T-cell (primary cell): ENCODE measurements at regions of chr4 and their contacts with region 1.

Region 1: GRCh38 chr4:139030614-139031235 is 15.1 kb downstream of the NOCT start:
- DNase-seq: peak; percentile 35 to 92 (median 70)
- ATAC-seq: peak; percentile 62 to 81 (median 75)
- H3K4me3 ChIP-seq: no peak overlapping the region
- H3K4me3 Mint-ChIP-seq: no peak overlapping the region
- H3K27ac ChIP-seq: no peak overlapping the region
- H3K27ac Mint-ChIP-seq: no peak overlapping the region
- H3K4me1 ChIP-seq: peaks cover 2 to 4% of the 10 kb centered on the region in 2 experiments
- H3K4me1 Mint-ChIP-seq: peaks cover 7 to 11% (median 9%) of the 10 kb centered on the region in 3 donors
- H3K27me3 ChIP-seq: no peaks in the 10 kb centered on the region
- H3K27me3 Mint-ChIP-seq: no peaks in the 10 kb centered on the region

Region 2: DNA sequence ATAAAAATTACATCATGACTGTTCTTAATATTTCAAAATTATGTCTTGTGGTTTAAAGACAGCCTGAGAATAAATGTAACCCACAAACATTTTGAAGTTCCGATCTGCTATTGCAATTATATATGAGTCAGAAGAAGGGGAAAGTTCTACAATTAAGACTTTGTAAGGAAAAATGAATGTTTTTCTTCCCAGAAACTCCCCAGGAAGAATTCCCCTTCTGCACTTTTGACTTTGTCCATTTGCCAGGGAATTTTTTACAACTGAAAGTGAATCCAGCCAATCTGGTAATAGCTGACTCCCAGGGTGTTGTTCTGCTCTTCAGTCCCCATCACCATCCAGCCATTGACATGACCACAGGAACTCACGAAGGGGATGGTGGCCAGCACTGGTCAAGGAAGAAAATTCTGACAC is 76.8 kb before region 1 on chr4:
- CTCF ChIA-PET with region 1: no interaction called
- POLR2A ChIA-PET with region 1: no interaction called
- DNase-seq: no peak
- ATAC-seq: no peak
- H3K4me3 ChIP-seq: no peak overlapping the region
- H3K4me3 Mint-ChIP-seq: no peak overlapping the region
- H3K27ac ChIP-seq: no peak overlapping the region
- H3K27ac Mint-ChIP-seq: no peak overlapping the region
- H3K4me1 ChIP-seq: peaks cover 0 to 3% of the 10 kb centered on the region in 2 experiments
- H3K4me1 Mint-ChIP-seq: peaks cover 0 to 4% (median 3%) of the 10 kb centered on the region in 3 donors
- H3K27me3 ChIP-seq: no peaks in the 10 kb centered on the region
- H3K27me3 Mint-ChIP-seq: peaks cover 10 to 15% of the 10 kb centered on the region in 2 donors

Region 3: GRCh38 chr4:139007640-139008039 is 23.1 kb before region 1 on chr4:
- CTCF ChIA-PET with region 1: interaction called in 1 of 2 experiments, 5 read pairs
- POLR2A ChIA-PET with region 1: interaction called in 1 of 2 experiments, 12 read pairs
- DNase-seq: no peak
- ATAC-seq: no peak
- H3K4me3 ChIP-seq: no peak overlapping the region
- H3K4me3 Mint-ChIP-seq: no peak overlapping the region
- H3K27ac ChIP-seq: no peak overlapping the region
- H3K27ac Mint-ChIP-seq: no peak overlapping the region
- H3K4me1 ChIP-seq: no peaks in the 10 kb centered on the region
- H3K4me1 Mint-ChIP-seq: no peaks in the 10 kb centered on the region
- H3K27me3 ChIP-seq: peaks cover 0 to 2% of the 10 kb centered on the region in 2 experiments
- H3K27me3 Mint-ChIP-seq: no peaks in the 10 kb centered on the region

Region 4: GRCh38 chr4:139042981-139043460 is 12.3 kb after region 1 on chr4:
- CTCF ChIA-PET with region 1: interaction called, 6 to 19 read pairs
- POLR2A ChIA-PET with region 1: no interaction called
- DNase-seq: no peak
- ATAC-seq: no peak
- H3K4me3 ChIP-seq: no peak overlapping the region
- H3K4me3 Mint-ChIP-seq: no peak overlapping the region
- H3K27ac ChIP-seq: no peak overlapping the region
- H3K27ac Mint-ChIP-seq: peak overlapping the region in 1 of 2 donors; percentile 34
- H3K4me1 ChIP-seq: no peaks in the 10 kb centered on the region
- H3K4me1 Mint-ChIP-seq: peaks cover 9% of the 10 kb centered on the region in 3 donors
- H3K27me3 ChIP-seq: no peaks in the 10 kb centered on the region
- H3K27me3 Mint-ChIP-seq: no peaks in the 10 kb centered on the region

Region 5: GRCh38 chr4:139083956-139084803 is 53.5 kb after region 1 on chr4:
- CTCF ChIA-PET with region 1: interaction called, 8 to 49 read pairs
- POLR2A ChIA-PET with region 1: interaction called in 1 of 2 experiments, 12 read pairs
- DNase-seq: peak; percentile 66 to 90 (median 79)
- ATAC-seq: peak; percentile 56 to 68 (median 63)
- H3K4me3 ChIP-seq: peak overlapping the region; percentile 94 to 98
- H3K4me3 Mint-ChIP-seq: peak overlapping the region; percentile 88 to 99 (median 92)
- H3K27ac ChIP-seq: peak overlapping the region; percentile 93
- H3K27ac Mint-ChIP-seq: peak overlapping the region; percentile 98 to 100
- H3K4me1 ChIP-seq: peaks cover 2 to 22% of the 10 kb centered on the region in 2 experiments
- H3K4me1 Mint-ChIP-seq: peaks cover 40 to 49% (median 42%) of the 10 kb centered on the region in 3 donors
- H3K27me3 ChIP-seq: no peaks in the 10 kb centered on the region
- H3K27me3 Mint-ChIP-seq: no peaks in the 10 kb centered on the region

Region 6: DNA sequence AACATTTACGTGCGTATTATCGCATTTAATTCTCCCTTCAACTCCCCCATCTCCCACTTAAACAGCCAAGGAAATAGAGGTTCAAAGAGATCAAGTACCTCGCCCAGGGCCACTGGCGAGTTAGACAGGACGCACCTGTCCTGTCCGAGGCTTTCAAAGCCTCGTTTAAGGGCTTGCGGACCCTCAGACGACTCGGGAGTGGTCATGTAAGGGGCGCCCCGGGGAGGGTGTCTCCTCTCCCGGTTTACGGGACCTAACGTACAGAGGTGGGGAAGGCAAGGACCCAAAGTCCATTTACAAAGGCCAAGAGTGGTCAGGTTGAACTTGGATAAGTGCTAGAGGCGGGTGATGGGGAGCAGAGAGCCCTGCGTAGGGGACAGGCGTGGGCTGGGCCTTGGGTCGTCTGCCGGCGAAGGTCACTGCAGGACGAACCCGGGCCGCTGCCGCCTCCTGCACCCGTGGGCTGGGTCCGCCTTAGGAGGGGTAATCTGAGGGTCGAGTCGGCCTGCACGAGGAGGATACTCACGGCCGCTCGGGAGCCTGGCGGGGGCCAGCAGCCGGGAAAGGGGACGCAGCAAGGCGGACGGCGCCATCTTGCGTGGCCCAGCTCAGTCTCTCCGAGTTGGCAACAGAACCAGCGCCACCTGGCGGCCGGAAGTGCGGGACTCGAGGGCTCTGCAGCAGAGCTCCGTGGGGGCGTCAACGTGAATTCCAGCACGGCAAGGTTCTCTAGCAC is 264.6 kb after region 1 on chr4:
- CTCF ChIA-PET with region 1: interaction called, 5 to 59 read pairs
- POLR2A ChIA-PET with region 1: no interaction called
- DNase-seq: peak; percentile 88 to 100 (median 96)
- ATAC-seq: peak; percentile 96 to 97 (median 96)
- H3K4me3 ChIP-seq: peak overlapping the region; percentile 76 to 98
- H3K4me3 Mint-ChIP-seq: peak overlapping the region; percentile 92 to 100 (median 97)
- H3K27ac ChIP-seq: peak overlapping the region; percentile 85
- H3K27ac Mint-ChIP-seq: peak overlapping the region; percentile 94 to 96
- H3K4me1 ChIP-seq: peaks cover 13 to 15% of the 10 kb centered on the region in 2 experiments
- H3K4me1 Mint-ChIP-seq: peaks cover 27 to 37% (median 33%) of the 10 kb centered on the region in 3 donors
- H3K27me3 ChIP-seq: no peaks in the 10 kb centered on the region
- H3K27me3 Mint-ChIP-seq: no peaks in the 10 kb centered on the region

Region 7: GRCh38 chr4:139530833-139531427 is 500.2 kb after region 1 on chr4:
- CTCF ChIA-PET with region 1: interaction called, 9 to 35 read pairs
- POLR2A ChIA-PET with region 1: interaction called in 1 of 2 experiments, 3 read pairs
- DNase-seq: peak; percentile 6 to 73 (median 49)
- ATAC-seq: peak; percentile 61 to 75 (median 66)
- H3K4me3 ChIP-seq: no peak overlapping the region
- H3K4me3 Mint-ChIP-seq: no peak overlapping the region
- H3K27ac ChIP-seq: no peak overlapping the region
- H3K27ac Mint-ChIP-seq: no peak overlapping the region
- H3K4me1 ChIP-seq: peaks cover 2 to 11% of the 10 kb centered on the region in 2 experiments
- H3K4me1 Mint-ChIP-seq: peaks cover 0 to 14% (median 12%) of the 10 kb centered on the region in 3 donors
- H3K27me3 ChIP-seq: no peaks in the 10 kb centered on the region
- H3K27me3 Mint-ChIP-seq: no peaks in the 10 kb centered on the region

Region 8: DNA sequence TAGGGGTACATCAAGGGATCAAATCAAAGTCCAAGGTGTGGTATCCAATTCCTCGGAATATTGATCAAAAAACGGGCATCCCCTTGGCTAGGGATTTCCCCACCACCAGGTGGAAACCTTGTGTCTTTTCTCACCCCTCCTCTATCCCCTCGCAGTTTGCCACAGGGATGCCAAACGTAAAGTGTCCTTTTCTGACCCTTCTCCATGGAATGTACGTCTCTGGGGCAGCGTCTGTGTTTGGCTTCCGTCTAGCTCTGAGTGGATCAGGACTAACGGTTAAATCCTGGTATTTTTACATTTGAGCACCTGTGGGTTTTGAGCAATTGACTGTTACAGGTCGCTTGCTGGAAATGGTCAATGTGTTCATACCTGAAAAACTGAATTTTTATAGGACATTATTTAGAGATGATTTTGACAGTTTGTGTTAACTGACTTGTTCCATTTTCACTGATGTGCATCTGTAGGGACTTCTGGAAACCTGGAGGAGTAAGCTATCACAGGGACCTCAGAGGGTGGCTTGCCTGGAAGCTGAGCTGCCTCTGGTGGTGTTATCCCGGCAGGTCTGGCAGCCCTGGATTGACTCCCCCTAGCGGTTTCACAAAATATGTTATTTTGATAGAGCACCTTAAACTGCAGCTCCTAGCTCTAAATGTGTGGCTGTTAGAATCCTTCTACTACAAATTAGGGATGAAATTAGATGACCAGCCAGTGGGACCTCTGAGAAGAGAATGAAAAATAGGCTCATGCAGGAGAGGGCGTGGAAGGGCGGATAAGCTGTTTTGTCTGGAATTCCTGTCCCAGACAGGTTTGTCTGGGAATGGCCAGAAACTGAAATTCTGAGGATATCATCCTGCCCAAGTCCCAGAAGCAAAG is 626.1 kb after region 1 on chr4:
- CTCF ChIA-PET with region 1: interaction called in 1 of 2 experiments, 19 read pairs
- POLR2A ChIA-PET with region 1: no interaction called
- DNase-seq: peak in 33 of 35 experiments; percentile 10 to 72 (median 32)
- ATAC-seq: peak; percentile 43 to 84 (median 48)
- H3K4me3 ChIP-seq: no peak overlapping the region
- H3K4me3 Mint-ChIP-seq: peak overlapping the region; percentile 51 to 69 (median 60)
- H3K27ac ChIP-seq: no peak overlapping the region
- H3K27ac Mint-ChIP-seq: peak overlapping the region; percentile 95 to 98
- H3K4me1 ChIP-seq: peaks cover 0 to 14% of the 10 kb centered on the region in 2 experiments
- H3K4me1 Mint-ChIP-seq: peaks cover 22 to 25% (median 23%) of the 10 kb centered on the region in 3 donors
- H3K27me3 ChIP-seq: peaks cover 0 to 6% of the 10 kb centered on the region in 2 experiments
- H3K27me3 Mint-ChIP-seq: peaks cover 3 to 8% of the 10 kb centered on the region in 2 donors